Body of pancreas (tissue), 4 donors: ENCODE measurements at regions of chr9 and their contacts with region 1.

Region 1: GRCh38 chr9:33304362-33304761 is 14.0 kb downstream of the NFX1 start:
- DNase-seq: no peak
- ATAC-seq: no peak
- H3K4me3 ChIP-seq: no peak overlapping the region
- H3K27ac ChIP-seq: no peak overlapping the region
- H3K4me1 ChIP-seq: peaks cover 2% of the 10 kb centered on the region
- H3K27me3 ChIP-seq: no peaks in the 10 kb centered on the region
- CTCF ChIP-seq: no peak
- POLR2A ChIP-seq: no peak

Region 2: GRCh38 chr9:32526041-32526706 is 778.2 kb before region 1 on chr9 and contains the start of gene RIGI:
- intact Hi-C with region 1: no loop called
- DNase-seq: peak; percentile 90 to 95 (median 94)
- ATAC-seq: peak; percentile 88
- H3K4me3 ChIP-seq: peak within 1 kb of the TSS; percentile 13 to 60
- H3K27ac ChIP-seq: peak within 1 kb of the TSS; percentile 63 to 92 (median 86)
- H3K4me1 ChIP-seq: peaks cover 43% of the 10 kb centered on the region
- H3K27me3 ChIP-seq: no peaks in the 10 kb centered on the region
- CTCF ChIP-seq: peak in 6 of 7 experiments; percentile 19 to 77 (median 58)
- POLR2A ChIP-seq: peak; percentile 50 to 84 (median 82)
- total RNA-seq, gene RIGI: 2.6 to 6.5 TPM

Region 3: GRCh38 chr9:33330005-33330404 is 25.6 kb after region 1 on chr9:
- intact Hi-C with region 1: loop called (anchors 5 kb)
- DNase-seq: no peak
- ATAC-seq: no peak
- H3K4me3 ChIP-seq: no peak overlapping the region
- H3K27ac ChIP-seq: peak overlapping the region; percentile 26 to 86 (median 74)
- H3K4me1 ChIP-seq: peaks cover 22% of the 10 kb centered on the region
- H3K27me3 ChIP-seq: no peaks in the 10 kb centered on the region
- CTCF ChIP-seq: no peak
- POLR2A ChIP-seq: no peak